ENCODE measurements at regions of chr7 and their contacts with region 1.

Region 1: GRCh38 chr7:27199849-27200760 is at the start of gene HOXA13:
- DNase-seq: peak in 1 of 2 donors; percentile 52
- H3K4me3 ChIP-seq: peak within 1 kb of the TSS; percentile 28 to 50 (median 40)
- H3K27ac ChIP-seq: no peak within 1 kb of the TSS
- H3K4me1 ChIP-seq: peaks cover 35 to 58% (median 47%) of the 10 kb centered on the region in 4 donors
- H3K27me3 ChIP-seq: peaks cover 48 to 100% (median 95%) of the 10 kb centered on the region in 3 donors
- CTCF ChIP-seq: no peak
- EP300 ChIP-seq: no peak
- POLR2A ChIP-seq: no peak
- total RNA-seq, gene HOXA13: 29.0 TPM in 1 of 5 donors, not detected in the others

Region 2: DNA sequence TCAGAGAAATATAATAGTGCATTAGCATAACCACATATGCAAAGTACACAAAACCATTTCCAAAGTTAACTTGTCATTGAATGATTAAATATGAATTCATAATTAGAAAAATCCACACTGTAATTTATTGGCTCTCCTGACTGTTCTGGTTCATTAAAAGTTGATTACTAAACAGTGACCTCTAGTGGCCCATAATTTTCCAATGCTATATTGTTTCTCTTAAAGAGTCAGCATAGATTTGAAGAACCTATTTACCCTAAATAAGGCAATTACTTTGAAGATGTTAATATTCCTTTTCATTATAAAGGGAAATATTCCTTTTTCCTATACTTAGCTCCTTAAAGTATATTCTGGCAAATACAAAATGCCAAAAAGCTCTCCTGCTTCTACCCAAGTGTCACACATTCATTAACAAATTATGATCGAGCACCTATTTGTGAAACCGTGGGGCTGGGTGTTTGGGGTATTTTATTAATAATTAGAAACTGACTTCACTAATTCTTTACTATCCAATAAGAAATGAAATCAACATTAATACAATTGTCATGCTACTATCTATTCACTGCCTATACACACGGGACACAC is 376.3 kb after region 1 on chr7:
- intact Hi-C with region 1: loop called (anchors 10 kb)
- DNase-seq: peak in 1 of 2 donors; percentile 75
- H3K4me3 ChIP-seq: no peak overlapping the region
- H3K27ac ChIP-seq: no peak overlapping the region
- H3K4me1 ChIP-seq: no peaks in the 10 kb centered on the region
- H3K27me3 ChIP-seq: no peaks in the 10 kb centered on the region
- CTCF ChIP-seq: peak in 4 of 7 experiments; percentile 33 to 66 (median 54)
- EP300 ChIP-seq: no peak
- POLR2A ChIP-seq: no peak

Region 3: DNA sequence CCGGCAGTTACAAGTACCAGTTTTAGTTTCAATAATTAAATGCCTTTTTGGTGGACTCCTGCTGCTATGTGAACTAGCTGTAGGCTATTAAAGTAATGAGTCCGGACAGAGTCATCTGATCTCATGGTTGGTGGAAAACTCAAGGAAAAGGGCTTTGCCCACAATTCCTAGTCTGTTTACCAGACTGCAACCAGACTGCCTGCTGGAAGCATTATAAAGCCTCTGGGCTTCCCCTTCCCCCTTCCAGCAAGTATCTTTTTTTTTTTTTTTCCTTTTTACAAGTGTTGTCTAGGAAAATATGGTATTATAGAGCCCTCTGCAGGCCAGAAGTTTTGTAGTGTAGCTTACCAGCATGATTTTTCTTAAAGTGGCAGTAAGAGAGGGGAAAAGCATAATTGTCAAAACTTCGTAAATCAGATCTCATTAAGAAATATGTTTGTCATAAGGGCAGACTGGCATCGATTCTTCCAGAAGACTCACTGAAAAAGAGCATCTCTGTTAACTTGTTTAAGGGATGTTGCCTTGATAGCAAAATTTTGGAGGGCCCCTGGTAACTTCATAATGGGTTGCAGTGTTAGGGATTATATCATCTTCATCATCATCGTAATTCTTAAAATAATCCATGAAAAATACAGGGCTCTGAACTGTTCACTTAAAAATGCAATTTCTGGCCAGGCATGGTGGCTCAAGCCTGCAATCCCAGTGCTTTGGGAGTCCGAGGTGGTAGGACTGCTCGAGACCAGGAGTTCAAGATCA is 721.2 kb after region 1 on chr7:
- intact Hi-C with region 1: loop called (anchors 10 kb)
- DNase-seq: peak in 1 of 2 donors; percentile 90
- H3K4me3 ChIP-seq: no peak overlapping the region
- H3K27ac ChIP-seq: no peak overlapping the region
- H3K4me1 ChIP-seq: peaks cover 0 to 38% (median 13%) of the 10 kb centered on the region in 4 donors
- H3K27me3 ChIP-seq: no peaks in the 10 kb centered on the region
- CTCF ChIP-seq: peak in 4 of 7 experiments; percentile 19 to 46 (median 45)
- EP300 ChIP-seq: no peak
- POLR2A ChIP-seq: no peak

Region 4: DNA sequence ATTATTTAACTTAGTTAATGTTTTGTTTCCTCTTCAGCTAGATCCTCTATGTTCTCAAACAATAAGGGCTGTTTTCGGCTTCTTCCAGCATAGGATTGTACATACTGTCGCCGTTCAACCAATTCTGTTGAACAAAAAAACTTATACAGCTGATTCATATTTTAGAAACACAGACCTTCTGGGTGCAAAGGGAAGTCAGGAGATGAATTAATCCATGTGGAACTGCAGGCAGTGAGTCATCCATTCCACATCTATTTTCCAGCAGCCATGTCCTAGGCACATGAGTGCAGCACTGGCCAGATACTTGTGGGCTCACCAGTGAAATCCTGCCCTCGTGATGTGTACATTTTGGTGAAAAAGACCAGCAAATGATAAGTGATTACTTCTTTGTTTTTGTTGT is 817.3 kb after region 1 on chr7:
- intact Hi-C with region 1: loop called (anchors 10 kb)
- DNase-seq: no peak
- H3K4me3 ChIP-seq: no peak overlapping the region
- H3K27ac ChIP-seq: no peak overlapping the region
- H3K4me1 ChIP-seq: peaks cover 0 to 35% (median 12%) of the 10 kb centered on the region in 4 donors
- H3K27me3 ChIP-seq: no peaks in the 10 kb centered on the region
- CTCF ChIP-seq: no peak
- EP300 ChIP-seq: no peak
- POLR2A ChIP-seq: no peak

Measured in stomach (tissue), 19 donors.